Activated T-helper 1 cell treated with anti-CD3 and anti-CD28 coated beads, Interleukin-12 subunit alpha, Interleukin-12 subunit beta, Interleukin-2, Interleukin-4 antibody, amounts not matched to agents 30 ng/mL and 10 ng/mL and 1 ng/mL, durations not matched to agents 14 hours and 24 hours and 36 hours (primary cell): ENCODE measurements at regions of chr11 and their contacts with region 1.

Region 1: DNA sequence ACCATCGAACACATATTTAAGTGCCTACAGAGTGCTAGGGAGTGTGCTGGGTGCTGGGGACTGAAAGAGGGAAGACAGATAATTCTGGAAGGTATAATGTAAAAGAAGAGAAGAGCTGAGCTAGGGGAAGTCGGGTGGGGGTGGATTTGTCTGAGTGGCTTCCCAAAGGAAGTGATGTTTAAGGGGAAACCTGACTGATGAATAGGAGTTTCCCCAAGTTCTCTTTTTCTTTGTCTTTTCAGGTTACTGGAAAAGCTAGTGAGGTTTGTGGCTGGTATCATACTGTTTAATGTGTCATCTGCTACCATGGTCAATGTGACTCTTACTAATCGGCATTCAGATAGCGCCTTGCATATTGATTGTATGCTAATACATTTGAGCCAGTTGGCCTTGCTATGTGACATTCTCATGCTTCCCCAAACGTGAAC is 151.6 kb upstream of the MTMR2 start:
- DNase-seq: no peak
- H3K4me3 Mint-ChIP-seq: peak overlapping the region; percentile 15
- H3K27ac Mint-ChIP-seq: peak overlapping the region; percentile 78
- H3K4me1 Mint-ChIP-seq: peaks cover 35% of the 10 kb centered on the region
- H3K27me3 Mint-ChIP-seq: no peaks in the 10 kb centered on the region

Region 2: GRCh38 chr11:95392646-95393045 is 682.9 kb before region 1 on chr11:
- intact Hi-C with region 1: no loop called
- DNase-seq: no peak
- H3K4me3 Mint-ChIP-seq: no peak overlapping the region
- H3K27ac Mint-ChIP-seq: no peak overlapping the region
- H3K4me1 Mint-ChIP-seq: no peaks in the 10 kb centered on the region
- H3K27me3 Mint-ChIP-seq: peaks cover 3% of the 10 kb centered on the region

Region 3: GRCh38 chr11:96062134-96062533 is 13.4 kb before region 1 on chr11:
- intact Hi-C with region 1: loop called (anchors 1 kb)
- DNase-seq: peak; percentile 8
- H3K4me3 Mint-ChIP-seq: no peak overlapping the region
- H3K27ac Mint-ChIP-seq: peak overlapping the region; percentile 61
- H3K4me1 Mint-ChIP-seq: peaks cover 53% of the 10 kb centered on the region
- H3K27me3 Mint-ChIP-seq: no peaks in the 10 kb centered on the region

Region 4: DNA sequence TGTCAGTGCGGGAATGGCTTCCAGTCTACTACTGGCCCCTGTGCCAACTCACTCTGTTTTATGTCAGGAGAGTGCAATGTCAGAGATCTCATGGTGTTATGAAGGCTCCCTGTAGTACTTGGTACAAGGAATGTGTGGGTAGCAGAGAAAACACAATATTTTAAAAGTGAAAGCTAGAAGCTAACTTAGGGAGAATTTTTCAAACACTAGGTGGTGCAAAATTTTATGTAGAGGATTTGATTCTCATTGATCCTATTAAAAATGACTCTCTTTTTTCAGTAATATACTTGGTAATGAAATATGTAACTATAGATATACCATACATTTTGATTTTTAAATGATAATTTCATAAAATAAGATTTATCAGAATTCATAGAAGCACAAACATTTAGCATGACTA is 448.9 kb after region 1 on chr11:
- intact Hi-C with region 1: no loop called
- DNase-seq: no peak
- H3K4me3 Mint-ChIP-seq: no peak overlapping the region
- H3K27ac Mint-ChIP-seq: no peak overlapping the region
- H3K4me1 Mint-ChIP-seq: no peaks in the 10 kb centered on the region
- H3K27me3 Mint-ChIP-seq: no peaks in the 10 kb centered on the region

Region 5: GRCh38 chr11:96538104-96538503 is 462.6 kb after region 1 on chr11:
- intact Hi-C with region 1: no loop called
- DNase-seq: no peak
- H3K4me3 Mint-ChIP-seq: no peak overlapping the region
- H3K27ac Mint-ChIP-seq: no peak overlapping the region
- H3K4me1 Mint-ChIP-seq: no peaks in the 10 kb centered on the region
- H3K27me3 Mint-ChIP-seq: peaks cover 2% of the 10 kb centered on the region